Activated naive CD4-positive, alpha-beta T cell treated with anti-CD3 and anti-CD28 coated beads, Interleukin-2, amount 10 ng/mL, durations not matched to agents 7 days and 5 days (primary cell): ENCODE measurements at regions of chr5 and their contacts with region 1.

Region 1: DNA sequence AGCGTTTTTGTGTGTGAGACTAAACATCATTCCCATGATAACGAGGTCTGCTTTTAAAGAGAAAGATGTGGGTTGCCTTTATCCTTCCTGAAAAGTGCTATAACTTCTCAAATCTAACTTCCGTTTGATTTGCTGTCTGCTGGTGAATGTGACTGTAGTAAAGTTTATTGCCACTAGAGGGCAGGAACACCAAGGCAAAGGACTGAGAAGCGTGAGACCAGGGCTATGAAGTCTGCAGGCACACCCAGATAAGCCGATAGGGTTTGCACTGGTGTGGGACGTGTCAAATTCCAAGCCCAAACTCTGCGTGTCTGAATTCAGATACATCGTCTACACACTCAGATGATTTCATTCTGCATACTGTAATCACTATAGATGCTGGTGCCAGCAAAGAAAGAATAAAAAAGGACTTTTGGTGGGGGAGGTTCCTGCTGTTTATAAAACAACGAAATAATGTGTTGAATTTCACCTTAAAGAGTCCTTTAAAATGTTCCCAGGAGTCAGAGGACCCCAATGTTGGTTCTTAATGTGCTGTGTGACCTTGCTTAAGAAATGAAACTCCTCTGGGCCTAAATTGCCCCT is 87.2 kb downstream of the PTTG1 start:
- DNase-seq: peak; percentile 69
- H3K4me3 Mint-ChIP-seq: no peak overlapping the region
- H3K27ac Mint-ChIP-seq: no peak overlapping the region
- H3K4me1 Mint-ChIP-seq: peaks cover 31% of the 10 kb centered on the region
- H3K27me3 Mint-ChIP-seq: peaks cover 14% of the 10 kb centered on the region

Region 2: DNA sequence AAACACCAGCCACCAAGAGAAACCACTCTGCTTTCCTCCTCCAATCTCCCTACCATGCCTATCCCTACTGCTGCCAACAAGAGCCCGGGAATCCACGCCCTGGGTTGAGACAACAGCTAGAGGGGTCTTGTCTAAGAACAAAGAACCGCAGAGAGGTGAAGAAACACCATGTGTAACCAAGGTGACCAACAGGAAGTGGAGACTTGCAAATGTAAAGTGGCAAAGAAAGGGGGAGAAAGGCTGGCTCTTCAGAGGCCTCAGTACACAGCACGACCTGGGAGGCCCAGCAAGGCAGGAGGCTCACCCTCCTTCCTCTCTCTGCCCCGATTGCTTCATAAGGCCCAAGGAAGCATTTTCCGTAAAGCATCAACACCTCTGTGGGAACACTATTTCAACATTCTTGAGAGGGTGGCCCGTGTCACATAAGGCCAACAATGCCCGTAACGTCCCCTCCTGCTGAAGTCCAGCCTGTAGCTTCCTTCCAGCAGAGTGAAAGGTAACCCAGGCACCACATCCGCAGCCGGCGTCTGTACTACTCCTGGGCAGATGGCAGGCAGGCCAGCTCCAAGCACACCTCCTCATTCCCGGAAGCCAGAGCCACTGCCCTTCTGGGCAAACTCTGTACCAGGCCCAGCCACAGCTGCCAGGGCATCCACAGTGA is 214.8 kb before region 1 on chr5:
- CTCF ChIA-PET with region 1: no interaction called
- DNase-seq: no peak
- H3K4me3 Mint-ChIP-seq: no peak overlapping the region
- H3K27ac Mint-ChIP-seq: no peak overlapping the region
- H3K4me1 Mint-ChIP-seq: no peaks in the 10 kb centered on the region
- H3K27me3 Mint-ChIP-seq: peaks cover 8% of the 10 kb centered on the region

Region 3: GRCh38 chr5:160467555-160468362 is 41.1 kb before region 1 on chr5:
- CTCF ChIA-PET with region 1: interaction called, 19 read pairs
- DNase-seq: peak; percentile 84
- H3K4me3 Mint-ChIP-seq: peak overlapping the region; percentile 97
- H3K27ac Mint-ChIP-seq: peak overlapping the region; percentile 96
- H3K4me1 Mint-ChIP-seq: peaks cover 78% of the 10 kb centered on the region
- H3K27me3 Mint-ChIP-seq: peaks cover 3% of the 10 kb centered on the region